ENCODE measurements at regions of chr6 and their contacts with region 1.

Region 1: GRCh38 chr6:1335367-1336037 is 23.6 kb downstream of the FOXQ1 start:
- DNase-seq: peak; percentile 98
- ATAC-seq: peak; percentile 93
- H3K4me3 ChIP-seq: peak overlapping the region; percentile 20 to 65 (median 31)
- H3K27ac ChIP-seq: peak overlapping the region; percentile 73
- H3K4me1 ChIP-seq: peaks cover 48% of the 10 kb centered on the region
- H3K27me3 ChIP-seq: peaks cover 0 to 10% of the 10 kb centered on the region in 2 experiments; a peak in 1 of 5 replicates
- CTCF ChIP-seq: peak; percentile 41
- EP300 ChIP-seq: peak; percentile 89 to 93
- POLR2A ChIP-seq: peak in 1 of 2 experiments; percentile 52; a peak in 3 of 4 replicates
- RAD21 ChIP-seq: peak; percentile 52; the same call in 1 of the 2 replicates

Region 2: GRCh38 chr6:835476-836160 is 499.9 kb before region 1 on chr6:
- CTCF ChIA-PET with region 1: no interaction called
- POLR2A ChIA-PET with region 1: interaction called, 12 read pairs
- in situ Hi-C with region 1: no loop called
- intact Hi-C with region 1: no loop called
- DNase-seq: no peak
- ATAC-seq: peak; percentile 48; the same call in 1 of the 3 replicates
- H3K4me3 ChIP-seq: no peak overlapping the region
- H3K27ac ChIP-seq: no peak overlapping the region
- H3K4me1 ChIP-seq: peaks cover 33% of the 10 kb centered on the region
- H3K27me3 ChIP-seq: peaks cover 1 to 4% of the 10 kb centered on the region in 2 experiments; a peak in 1 of 5 replicates
- CTCF ChIP-seq: no peak
- EP300 ChIP-seq: no peak
- POLR2A ChIP-seq: no peak
- RAD21 ChIP-seq: no peak

Region 3: GRCh38 chr6:903761-904160 is 431.7 kb before region 1 on chr6:
- CTCF ChIA-PET with region 1: no interaction called
- POLR2A ChIA-PET with region 1: interaction called, 32 read pairs
- in situ Hi-C with region 1: no loop called
- intact Hi-C with region 1: no loop called
- DNase-seq: no peak
- ATAC-seq: no peak
- H3K4me3 ChIP-seq: no peak overlapping the region
- H3K27ac ChIP-seq: no peak overlapping the region
- H3K4me1 ChIP-seq: peaks cover 30% of the 10 kb centered on the region
- H3K27me3 ChIP-seq: peaks cover 2 to 15% of the 10 kb centered on the region in 2 experiments; a peak in 2 of 5 replicates
- CTCF ChIP-seq: no peak
- EP300 ChIP-seq: no peak
- POLR2A ChIP-seq: no peak
- RAD21 ChIP-seq: no peak

Region 4: DNA sequence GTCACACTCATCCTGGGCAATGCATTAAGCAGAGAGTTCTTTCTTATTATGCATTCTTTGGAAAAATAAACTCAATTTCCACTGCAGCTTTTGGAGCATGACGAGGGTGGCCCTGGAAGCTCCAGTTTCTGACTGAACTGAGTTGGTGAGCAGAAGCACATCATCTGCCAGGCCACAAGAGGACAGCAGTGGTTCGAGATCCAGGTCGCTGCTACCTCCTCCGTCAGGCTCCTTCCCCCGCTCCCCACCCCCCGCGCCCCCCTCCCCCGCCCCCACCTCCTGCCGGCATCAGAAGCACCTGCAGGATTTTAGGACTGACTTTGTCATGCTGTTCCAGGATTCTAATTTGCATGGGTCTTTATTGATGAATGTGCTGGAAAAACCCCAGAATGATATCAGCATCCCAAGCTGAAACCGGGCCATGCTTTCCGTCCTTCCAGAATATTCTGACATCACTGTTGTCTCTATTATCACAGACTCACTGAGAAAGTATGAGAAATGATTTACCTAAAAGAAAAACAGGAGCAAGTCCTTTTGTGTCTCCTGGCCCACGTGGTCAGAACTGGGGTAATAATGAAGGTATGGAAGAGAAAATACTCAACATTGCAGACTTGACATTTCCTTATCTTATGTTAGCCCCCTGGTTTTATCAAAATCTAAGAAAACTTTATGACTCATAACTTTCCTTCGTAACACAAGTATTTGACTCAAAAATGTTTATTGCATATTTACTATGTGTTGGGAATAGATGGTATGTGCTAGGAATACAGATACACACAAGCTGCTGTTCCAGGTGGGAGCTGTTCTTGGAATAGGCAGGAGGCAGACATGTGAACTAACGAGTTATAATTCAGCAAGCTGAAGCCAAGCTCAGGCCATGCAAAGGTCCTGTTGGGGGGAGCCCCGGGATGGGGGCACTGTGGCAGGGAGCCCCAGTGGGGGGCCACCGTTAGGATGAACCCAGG is 422.3 kb before region 1 on chr6:
- CTCF ChIA-PET with region 1: interaction called, 22 read pairs
- POLR2A ChIA-PET with region 1: interaction called, 29 read pairs
- in situ Hi-C with region 1: loop called (anchors 5 kb)
- intact Hi-C with region 1: loop called (anchors 1 kb)
- DNase-seq: peak; percentile 56
- ATAC-seq: peak; percentile 91
- H3K4me3 ChIP-seq: no peak overlapping the region
- H3K27ac ChIP-seq: no peak overlapping the region
- H3K4me1 ChIP-seq: peaks cover 16% of the 10 kb centered on the region
- H3K27me3 ChIP-seq: peaks cover 2 to 15% of the 10 kb centered on the region in 2 experiments; a peak in 1 of 5 replicates
- CTCF ChIP-seq: peak; percentile 84
- EP300 ChIP-seq: no peak
- POLR2A ChIP-seq: no peak
- RAD21 ChIP-seq: peak; percentile 85

Region 5: GRCh38 chr6:1024587-1024986 is 310.9 kb before region 1 on chr6:
- CTCF ChIA-PET with region 1: no interaction called
- POLR2A ChIA-PET with region 1: no interaction called
- in situ Hi-C with region 1: no loop called
- intact Hi-C with region 1: no loop called
- DNase-seq: peak; percentile 52
- ATAC-seq: no peak
- H3K4me3 ChIP-seq: no peak overlapping the region
- H3K27ac ChIP-seq: no peak overlapping the region
- H3K4me1 ChIP-seq: peaks cover 17% of the 10 kb centered on the region
- H3K27me3 ChIP-seq: no peaks in the 10 kb centered on the region
- CTCF ChIP-seq: no peak
- EP300 ChIP-seq: no peak
- POLR2A ChIP-seq: no peak
- RAD21 ChIP-seq: no peak

Region 6: GRCh38 chr6:1436334-1437306 is 101.1 kb after region 1 on chr6:
- CTCF ChIA-PET with region 1: no interaction called
- POLR2A ChIA-PET with region 1: no interaction called
- in situ Hi-C with region 1: no loop called
- intact Hi-C with region 1: loop called (anchors 1 kb)
- DNase-seq: peak; percentile 67
- ATAC-seq: peak; percentile 98
- H3K4me3 ChIP-seq: no peak overlapping the region
- H3K27ac ChIP-seq: no peak overlapping the region
- H3K4me1 ChIP-seq: no peaks in the 10 kb centered on the region
- H3K27me3 ChIP-seq: peaks cover 10 to 47% of the 10 kb centered on the region in 2 experiments
- CTCF ChIP-seq: peak; percentile 84
- EP300 ChIP-seq: no peak
- POLR2A ChIP-seq: no peak
- RAD21 ChIP-seq: peak; percentile 84